ENCODE measurements at regions of chr12 and their contacts with region 1.

Region 1: DNA sequence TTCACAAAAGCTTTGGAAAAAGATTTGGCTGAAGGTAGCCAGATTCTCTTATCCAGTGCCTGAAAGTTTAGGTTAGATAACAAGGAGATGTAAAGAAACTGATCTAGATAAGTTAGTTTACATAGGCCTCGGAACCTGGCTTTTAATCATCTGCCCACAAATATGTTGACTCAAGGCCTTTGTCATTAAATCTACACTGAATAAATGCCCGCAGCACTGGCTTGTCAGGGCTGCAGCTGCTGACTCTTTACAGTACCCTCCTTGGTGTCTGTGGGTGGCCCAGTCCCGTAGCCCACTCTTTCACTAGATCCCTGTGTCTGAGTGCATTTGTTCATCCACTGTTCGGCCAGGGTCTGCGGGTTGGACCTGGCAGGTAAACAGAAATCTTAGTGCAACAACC is 58.0 kb downstream of the TMEM116 start:
- DNase-seq: peak; percentile 79
- ATAC-seq: peak; percentile 97
- H3K4me3 ChIP-seq: no peak overlapping the region
- H3K27ac ChIP-seq: no peak overlapping the region
- H3K4me1 ChIP-seq: peaks cover 15% of the 10 kb centered on the region
- H3K27me3 ChIP-seq: no peaks in the 10 kb centered on the region
- CTCF ChIP-seq: no peak

Region 2: DNA sequence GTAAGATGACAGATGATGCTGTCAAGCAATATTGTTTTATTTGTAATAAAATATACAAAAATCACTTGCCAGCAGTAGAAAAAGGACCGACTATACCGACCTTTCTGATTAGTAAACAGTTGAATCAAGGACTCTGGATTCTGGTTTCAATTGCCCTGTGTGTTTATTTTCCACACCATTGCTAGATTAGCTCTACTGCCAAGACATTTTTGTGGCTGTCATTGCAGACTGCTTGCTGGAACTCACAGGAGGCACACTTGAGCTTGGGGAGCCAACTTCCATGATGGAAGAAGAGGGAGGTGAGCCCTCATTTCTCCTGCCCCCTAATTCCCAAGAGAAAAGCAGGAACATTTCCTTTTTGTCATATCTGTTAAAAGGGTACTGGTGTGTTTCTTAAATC is 61.7 kb before region 1 on chr12:
- CTCF ChIA-PET with region 1: no interaction called
- POLR2A ChIA-PET with region 1: no interaction called
- intact Hi-C with region 1: no loop called
- DNase-seq: no peak
- ATAC-seq: no peak
- H3K4me3 ChIP-seq: no peak overlapping the region
- H3K27ac ChIP-seq: no peak overlapping the region
- H3K4me1 ChIP-seq: no peaks in the 10 kb centered on the region
- H3K27me3 ChIP-seq: no peaks in the 10 kb centered on the region
- CTCF ChIP-seq: no peak

Region 3: GRCh38 chr12:111993292-111994150 is 38.5 kb after region 1 on chr12:
- CTCF ChIA-PET with region 1: no interaction called
- POLR2A ChIA-PET with region 1: no interaction called
- intact Hi-C with region 1: no loop called
- DNase-seq: no peak
- ATAC-seq: no peak
- H3K4me3 ChIP-seq: no peak overlapping the region
- H3K27ac ChIP-seq: no peak overlapping the region
- H3K4me1 ChIP-seq: peaks cover 5% of the 10 kb centered on the region; the same call in 1 of the 2 replicates
- H3K27me3 ChIP-seq: no peaks in the 10 kb centered on the region
- CTCF ChIP-seq: no peak

Region 4: GRCh38 chr12:112007945-112008344 is 53.0 kb after region 1 on chr12:
- CTCF ChIA-PET with region 1: no interaction called
- POLR2A ChIA-PET with region 1: interaction called, 4 read pairs
- intact Hi-C with region 1: loop called (anchors 2 kb)
- DNase-seq: no peak
- ATAC-seq: no peak
- H3K4me3 ChIP-seq: no peak overlapping the region
- H3K27ac ChIP-seq: no peak overlapping the region
- H3K4me1 ChIP-seq: peaks cover 25% of the 10 kb centered on the region
- H3K27me3 ChIP-seq: no peaks in the 10 kb centered on the region
- CTCF ChIP-seq: no peak

Region 5: GRCh38 chr12:112018571-112019237 is 63.7 kb after region 1 on chr12:
- CTCF ChIA-PET with region 1: interaction called, 3 read pairs
- POLR2A ChIA-PET with region 1: no interaction called
- intact Hi-C with region 1: loop called (anchors 2 kb)
- DNase-seq: peak; percentile 95
- ATAC-seq: peak; percentile 88
- H3K4me3 ChIP-seq: peak overlapping the region; percentile 14; the same call in 1 of the 2 replicates
- H3K27ac ChIP-seq: peak overlapping the region; percentile 38
- H3K4me1 ChIP-seq: peaks cover 41% of the 10 kb centered on the region
- H3K27me3 ChIP-seq: no peaks in the 10 kb centered on the region
- CTCF ChIP-seq: no peak

Measured in PC-3 (cell line).